Caco-2 (cell line): ENCODE measurements at regions of chr2 and their contacts with region 1.

Region 1: GRCh38 chr2:17646081-17646554 is 105.6 kb downstream of the VSNL1 start:
- DNase-seq: peak in 1 of 2 experiments; percentile 69
- H3K4me3 ChIP-seq: no peak overlapping the region
- H3K4me3 Mint-ChIP-seq: no peak overlapping the region
- H3K27ac Mint-ChIP-seq: no peak overlapping the region
- H3K4me1 ChIP-seq: no peaks in the 10 kb centered on the region
- H3K4me1 Mint-ChIP-seq: no peaks in the 10 kb centered on the region
- H3K27me3 ChIP-seq: no peaks in the 10 kb centered on the region
- H3K27me3 Mint-ChIP-seq: no peaks in the 10 kb centered on the region
- CTCF ChIP-seq: peak; percentile 74 to 76

Region 2: DNA sequence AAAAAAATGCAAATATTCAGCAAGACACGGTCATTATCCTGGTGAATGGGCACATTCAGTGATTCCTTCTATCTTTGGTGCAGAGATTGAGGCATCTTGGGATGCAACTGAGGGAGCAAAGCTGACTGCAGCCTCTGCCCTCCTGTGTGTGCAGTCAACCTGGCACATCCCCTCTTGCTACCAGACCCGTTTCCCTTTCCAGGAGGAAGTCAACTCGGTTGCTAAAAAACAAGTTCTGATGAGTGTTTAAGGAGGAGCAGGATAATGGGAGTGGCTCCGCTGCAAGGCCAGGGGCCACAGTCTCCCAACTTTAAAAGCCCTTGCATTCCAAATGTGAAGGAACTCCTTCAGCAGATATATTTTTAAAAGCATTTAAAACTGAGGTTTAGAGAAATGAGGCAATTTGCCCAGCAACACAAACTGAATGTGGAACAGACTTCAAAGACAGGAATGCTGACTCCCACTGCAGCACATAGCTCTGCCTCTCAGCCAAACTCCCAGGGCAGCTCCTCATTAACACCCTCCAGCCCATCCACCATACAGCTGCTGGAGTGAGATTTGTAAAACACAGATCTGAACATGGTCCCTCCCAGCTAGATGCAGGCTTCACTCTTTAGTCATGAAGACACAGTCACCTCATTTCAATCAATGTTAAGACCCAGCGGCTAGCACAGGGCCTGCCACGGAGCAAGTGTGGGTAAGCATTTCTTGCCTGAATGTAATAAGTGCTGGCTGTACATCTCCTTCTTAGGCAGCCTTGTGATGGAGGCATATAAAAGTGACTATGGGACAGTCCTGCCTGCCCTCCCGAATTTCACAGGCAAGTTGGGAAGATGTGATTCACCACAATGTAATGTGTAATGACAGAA is 51.4 kb before region 1 on chr2:
- CTCF ChIA-PET with region 1: interaction called, 4 read pairs
- POLR2A ChIA-PET with region 1: no interaction called
- intact Hi-C with region 1: loop called (anchors 5 kb)
- DNase-seq: no peak
- H3K4me3 ChIP-seq: no peak overlapping the region
- H3K4me3 Mint-ChIP-seq: no peak overlapping the region
- H3K27ac Mint-ChIP-seq: peak overlapping the region; percentile 22
- H3K4me1 ChIP-seq: peaks cover 22% of the 10 kb centered on the region
- H3K4me1 Mint-ChIP-seq: peaks cover 20% of the 10 kb centered on the region
- H3K27me3 ChIP-seq: no peaks in the 10 kb centered on the region
- H3K27me3 Mint-ChIP-seq: no peaks in the 10 kb centered on the region
- CTCF ChIP-seq: no peak

Region 3: DNA sequence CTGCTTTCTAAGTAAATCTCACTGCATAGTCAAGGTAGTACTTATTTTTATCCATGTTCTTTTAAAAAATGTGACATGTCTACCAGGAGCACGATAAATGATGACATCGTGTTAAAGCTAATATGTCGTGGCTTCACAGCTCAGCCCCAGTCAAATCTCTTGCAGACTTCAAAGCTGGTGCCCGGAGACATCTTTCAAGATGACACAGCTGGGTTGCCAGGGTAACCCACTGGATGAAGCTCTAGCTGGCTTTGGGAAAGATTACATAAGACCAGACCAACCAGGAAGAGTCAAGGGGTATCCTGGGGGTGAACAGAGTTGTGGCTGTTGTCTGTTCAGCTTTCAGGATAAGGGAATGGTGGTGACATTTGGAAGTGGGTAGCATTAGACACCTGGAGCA is 37.9 kb before region 1 on chr2:
- CTCF ChIA-PET with region 1: no interaction called
- POLR2A ChIA-PET with region 1: no interaction called
- intact Hi-C with region 1: no loop called
- DNase-seq: no peak
- H3K4me3 ChIP-seq: no peak overlapping the region
- H3K4me3 Mint-ChIP-seq: no peak overlapping the region
- H3K27ac Mint-ChIP-seq: no peak overlapping the region
- H3K4me1 ChIP-seq: no peaks in the 10 kb centered on the region
- H3K4me1 Mint-ChIP-seq: no peaks in the 10 kb centered on the region
- H3K27me3 ChIP-seq: no peaks in the 10 kb centered on the region
- H3K27me3 Mint-ChIP-seq: no peaks in the 10 kb centered on the region
- CTCF ChIP-seq: no peak

Region 4: GRCh38 chr2:17620280-17620679 is 25.8 kb before region 1 on chr2:
- CTCF ChIA-PET with region 1: no interaction called
- POLR2A ChIA-PET with region 1: no interaction called
- intact Hi-C with region 1: no loop called
- DNase-seq: no peak
- H3K4me3 ChIP-seq: no peak overlapping the region
- H3K4me3 Mint-ChIP-seq: no peak overlapping the region
- H3K27ac Mint-ChIP-seq: no peak overlapping the region
- H3K4me1 ChIP-seq: no peaks in the 10 kb centered on the region
- H3K4me1 Mint-ChIP-seq: no peaks in the 10 kb centered on the region
- H3K27me3 ChIP-seq: no peaks in the 10 kb centered on the region
- H3K27me3 Mint-ChIP-seq: peaks cover 10% of the 10 kb centered on the region
- CTCF ChIP-seq: no peak

Region 5: GRCh38 chr2:17672583-17673317 is 26.6 kb after region 1 on chr2:
- CTCF ChIA-PET with region 1: interaction called, 37 read pairs
- POLR2A ChIA-PET with region 1: no interaction called
- intact Hi-C with region 1: loop called (anchors 1 kb)
- DNase-seq: no peak
- H3K4me3 ChIP-seq: no peak overlapping the region
- H3K4me3 Mint-ChIP-seq: no peak overlapping the region
- H3K27ac Mint-ChIP-seq: no peak overlapping the region
- H3K4me1 ChIP-seq: no peaks in the 10 kb centered on the region
- H3K4me1 Mint-ChIP-seq: no peaks in the 10 kb centered on the region
- H3K27me3 ChIP-seq: no peaks in the 10 kb centered on the region
- H3K27me3 Mint-ChIP-seq: no peaks in the 10 kb centered on the region
- CTCF ChIP-seq: no peak

Region 6: GRCh38 chr2:17813742-17814473 is 167.8 kb after region 1 on chr2:
- CTCF ChIA-PET with region 1: no interaction called
- POLR2A ChIA-PET with region 1: no interaction called
- intact Hi-C with region 1: no loop called
- DNase-seq: no peak
- H3K4me3 ChIP-seq: no peak overlapping the region
- H3K4me3 Mint-ChIP-seq: no peak overlapping the region
- H3K27ac Mint-ChIP-seq: no peak overlapping the region
- H3K4me1 ChIP-seq: no peaks in the 10 kb centered on the region
- H3K4me1 Mint-ChIP-seq: no peaks in the 10 kb centered on the region
- H3K27me3 ChIP-seq: peaks cover 2% of the 10 kb centered on the region
- H3K27me3 Mint-ChIP-seq: peaks cover 19% of the 10 kb centered on the region
- CTCF ChIP-seq: no peak